Endothelial cell of umbilical vein (primary cell): ENCODE measurements at regions of chr5 and their contacts with region 1.

Region 1: DNA sequence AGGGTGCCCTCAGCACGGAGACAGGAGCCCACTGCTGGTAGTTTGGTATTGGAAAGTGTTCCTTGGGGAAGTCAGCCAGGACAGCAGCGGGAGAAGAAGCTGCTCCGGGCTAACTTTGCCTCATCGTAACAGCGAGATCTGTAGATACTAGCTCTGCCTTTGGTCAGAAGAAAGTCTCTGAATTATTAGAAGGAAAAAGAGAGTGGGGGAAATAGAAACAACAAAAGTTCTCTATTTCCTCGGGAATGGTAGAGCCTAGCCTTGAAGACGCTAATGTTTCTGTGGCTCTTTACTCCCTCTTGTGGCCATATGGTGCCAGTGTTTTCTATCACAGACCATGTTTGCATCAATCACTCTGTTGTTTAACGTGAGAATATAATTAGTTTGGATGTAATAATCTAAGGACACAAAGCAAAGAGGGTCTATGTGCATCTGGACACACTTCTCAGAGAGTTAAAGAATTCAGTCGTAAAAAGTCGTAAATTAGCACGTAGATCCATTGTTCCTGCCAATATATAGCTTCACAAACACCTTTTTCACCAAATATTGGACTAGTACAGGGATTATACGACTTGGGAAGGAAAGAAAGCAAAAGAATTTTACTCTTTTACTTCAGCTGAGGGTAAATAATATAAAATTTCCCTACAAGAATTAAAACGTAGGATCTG is 40.2 kb upstream of the HSD17B4 start:
- DNase-seq: peak; percentile 87
- H3K4me3 ChIP-seq: peak overlapping the region; percentile 22 to 90 (median 79)
- H3K27ac ChIP-seq: peak overlapping the region; percentile 47
- H3K4me1 ChIP-seq: peaks cover 4% of the 10 kb centered on the region
- H3K27me3 ChIP-seq: peaks cover 5 to 12% of the 10 kb centered on the region in 2 experiments
- CTCF ChIP-seq: peak; percentile 70 to 78
- POLR2A ChIP-seq: no peak

Region 2: DNA sequence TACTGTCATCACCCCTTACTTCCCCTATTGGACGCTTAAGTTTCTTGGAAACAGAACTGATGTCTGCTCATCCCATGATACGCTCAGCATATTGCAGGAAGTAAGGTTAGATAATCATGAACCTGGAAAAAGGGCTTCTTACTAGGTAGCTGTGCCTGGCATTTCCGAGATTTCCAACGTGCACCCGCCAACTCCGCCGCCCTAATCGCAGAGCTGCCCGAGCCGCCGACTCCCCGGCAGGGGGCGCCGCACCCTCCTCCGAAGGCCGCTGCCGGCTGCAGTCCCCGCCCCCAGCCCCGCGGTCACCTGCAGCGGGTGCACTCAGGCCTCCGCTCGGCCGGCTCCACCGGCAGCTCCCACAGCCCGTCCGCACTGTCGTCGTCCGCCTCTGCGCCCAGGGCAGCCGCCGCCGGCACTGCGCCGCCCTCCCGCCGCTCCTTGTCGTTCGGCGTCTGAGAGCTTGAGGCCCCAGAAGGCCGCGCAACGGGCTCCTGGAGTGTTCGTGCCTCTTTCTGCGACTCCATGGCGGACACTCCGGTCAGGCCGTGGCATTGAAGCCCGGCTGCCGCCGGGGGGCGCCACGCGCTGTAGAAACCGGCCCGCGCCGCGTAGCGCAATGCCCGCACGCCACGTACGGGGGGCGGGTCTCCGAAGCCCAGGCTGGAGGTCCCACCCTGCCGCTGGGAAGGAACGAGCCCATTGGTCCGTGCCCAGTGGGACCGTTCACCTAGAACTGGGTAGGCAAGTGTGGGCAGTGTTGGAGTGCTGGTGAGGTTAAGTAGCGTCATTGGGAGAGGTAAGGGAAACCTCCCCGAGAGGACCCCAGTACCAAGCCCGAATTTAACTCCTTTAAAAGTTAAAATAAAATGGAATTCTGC is 423.8 kb before region 1 on chr5 and contains the start of gene DTWD2:
- CTCF ChIA-PET with region 1: interaction called, 163 read pairs
- POLR2A ChIA-PET with region 1: no interaction called
- dilution Hi-C with region 1: no loop called
- intact Hi-C with region 1: loop called (anchors 1 kb)
- DNase-seq: peak; percentile 96
- H3K4me3 ChIP-seq: peak within 1 kb of the TSS; percentile 37 to 74 (median 56)
- H3K27ac ChIP-seq: no peak within 1 kb of the TSS
- H3K4me1 ChIP-seq: peaks cover 6% of the 10 kb centered on the region
- H3K27me3 ChIP-seq: peaks cover 0 to 2% of the 10 kb centered on the region in 2 experiments
- CTCF ChIP-seq: peak; percentile 96 to 97
- POLR2A ChIP-seq: no peak
- total RNA-seq, gene DTWD2: 1.1 and 2.3 TPM in 2 replicates

Region 3: DNA sequence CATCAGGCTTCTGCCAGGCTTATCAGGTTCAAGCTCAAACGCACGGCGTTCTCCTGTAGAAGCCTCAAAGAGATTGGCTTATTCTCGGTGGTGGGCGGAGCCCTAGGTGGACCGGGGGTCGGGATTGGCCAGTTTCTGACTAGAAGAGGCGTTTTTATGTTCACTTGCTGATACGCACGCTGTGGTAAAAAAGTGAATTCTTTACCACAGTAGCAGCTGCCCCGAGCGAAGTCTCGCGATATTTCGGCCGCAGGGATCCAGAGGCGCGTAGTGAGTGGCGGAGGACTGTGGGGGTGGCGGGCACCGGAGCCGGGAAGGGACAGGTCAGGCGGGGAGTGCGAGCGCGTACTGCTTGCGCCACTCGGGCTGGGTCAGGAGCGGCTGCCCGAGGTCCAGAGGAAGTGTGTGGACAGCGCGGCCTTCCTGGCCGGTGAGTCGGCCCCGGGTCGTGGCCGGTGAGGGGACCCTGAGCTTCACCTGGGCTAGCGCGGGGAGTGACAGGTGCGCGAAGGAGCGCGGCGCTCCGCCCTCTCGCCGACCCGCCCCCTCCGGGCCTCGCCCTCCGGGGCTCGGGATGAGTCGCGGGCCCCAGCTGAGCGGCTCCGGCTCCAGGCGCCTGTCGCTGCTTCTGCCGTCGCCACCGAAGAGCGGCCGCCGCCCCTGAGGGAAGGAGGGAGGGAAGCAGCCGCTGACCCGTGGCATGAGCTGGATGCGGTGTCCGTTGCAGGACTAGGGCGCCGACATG is 341.1 kb before region 1 on chr5 and contains the start of gene DMXL1:
- CTCF ChIA-PET with region 1: interaction called, 13 read pairs
- POLR2A ChIA-PET with region 1: interaction called, 5 read pairs
- dilution Hi-C with region 1: no loop called
- intact Hi-C with region 1: loop called (anchors 1 kb)
- DNase-seq: peak; percentile 100
- H3K4me3 ChIP-seq: peak within 1 kb of the TSS; percentile 61 to 100 (median 74)
- H3K27ac ChIP-seq: peak within 1 kb of the TSS; percentile 64
- H3K4me1 ChIP-seq: peaks cover 9% of the 10 kb centered on the region
- H3K27me3 ChIP-seq: no peaks in the 10 kb centered on the region
- CTCF ChIP-seq: no peak
- POLR2A ChIP-seq: peak; percentile 6
- total RNA-seq, gene DMXL1: 24.7 and 26.1 TPM in 2 replicates

Region 4: DNA sequence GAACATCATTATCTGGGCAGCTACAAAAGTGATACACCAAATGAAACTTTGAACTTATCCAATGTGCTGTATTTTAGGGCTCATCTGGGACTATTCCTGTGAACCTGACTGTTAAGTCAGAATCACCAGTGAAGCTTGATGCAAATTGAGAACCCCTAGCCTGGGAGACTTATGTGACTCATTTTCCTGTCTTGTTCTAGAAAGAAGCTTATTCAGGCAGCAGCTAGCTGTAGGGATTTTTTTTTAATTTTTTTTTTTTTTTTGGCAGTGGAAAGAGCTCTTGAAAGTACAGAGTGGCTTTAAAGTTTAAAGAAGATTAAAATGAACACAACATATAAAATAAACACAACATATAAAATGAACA is 137.3 kb before region 1 on chr5:
- CTCF ChIA-PET with region 1: interaction called, 25 read pairs
- POLR2A ChIA-PET with region 1: no interaction called
- dilution Hi-C with region 1: no loop called
- intact Hi-C with region 1: no loop called
- DNase-seq: peak; percentile 79
- H3K4me3 ChIP-seq: no peak overlapping the region
- H3K27ac ChIP-seq: peak overlapping the region; percentile 44
- H3K4me1 ChIP-seq: peaks cover 16% of the 10 kb centered on the region
- H3K27me3 ChIP-seq: no peaks in the 10 kb centered on the region
- CTCF ChIP-seq: no peak
- POLR2A ChIP-seq: no peak

Region 5: GRCh38 chr5:119332978-119333401 is 79.1 kb before region 1 on chr5:
- CTCF ChIA-PET with region 1: interaction called, 34 read pairs
- POLR2A ChIA-PET with region 1: no interaction called
- dilution Hi-C with region 1: no loop called
- intact Hi-C with region 1: loop called (anchors 1 kb)
- DNase-seq: no peak
- H3K4me3 ChIP-seq: no peak overlapping the region
- H3K27ac ChIP-seq: no peak overlapping the region
- H3K4me1 ChIP-seq: no peaks in the 10 kb centered on the region
- H3K27me3 ChIP-seq: no peaks in the 10 kb centered on the region
- CTCF ChIP-seq: no peak
- POLR2A ChIP-seq: no peak

Region 6: DNA sequence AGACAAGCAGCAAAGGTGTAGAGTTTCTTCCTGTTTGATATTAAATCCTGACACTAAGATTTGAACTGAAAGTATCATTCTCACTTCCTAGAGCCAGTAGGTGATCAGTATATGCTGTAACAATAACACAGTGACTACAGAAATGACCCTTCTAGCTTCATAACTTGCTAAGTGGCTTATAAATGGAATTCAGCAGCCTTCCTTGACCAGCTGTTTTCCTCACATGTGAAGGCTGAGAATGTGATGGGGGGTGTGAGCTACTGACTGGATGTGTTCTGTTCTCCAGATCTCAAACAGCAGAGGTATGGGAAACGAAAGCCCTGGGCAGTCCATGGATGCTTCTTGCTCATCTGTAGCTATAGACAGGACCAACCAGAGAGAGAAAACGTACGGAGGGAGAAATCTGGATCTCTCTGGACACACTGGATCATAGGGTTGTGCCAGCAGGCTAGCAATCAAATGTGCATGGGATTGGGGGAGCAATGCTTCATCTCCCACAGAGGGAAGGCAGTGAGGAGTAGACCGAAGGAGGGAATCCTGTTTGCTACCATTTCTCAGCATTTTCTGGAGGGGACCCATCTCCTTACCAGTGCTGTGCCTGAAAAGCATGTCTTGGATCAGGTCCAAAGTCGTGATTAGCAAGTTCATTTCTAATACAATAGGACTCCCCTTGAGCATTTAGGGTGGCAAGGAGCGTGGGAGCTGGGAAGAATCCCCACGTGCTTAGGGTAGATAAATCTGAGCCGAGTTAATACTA is 16.8 kb before region 1 on chr5:
- CTCF ChIA-PET with region 1: interaction called, 27 read pairs
- POLR2A ChIA-PET with region 1: no interaction called
- dilution Hi-C with region 1: no loop called
- intact Hi-C with region 1: no loop called
- DNase-seq: no peak
- H3K4me3 ChIP-seq: no peak overlapping the region
- H3K27ac ChIP-seq: no peak overlapping the region
- H3K4me1 ChIP-seq: peaks cover 25% of the 10 kb centered on the region
- H3K27me3 ChIP-seq: no peaks in the 10 kb centered on the region
- CTCF ChIP-seq: no peak
- POLR2A ChIP-seq: no peak